ENCODE measurements at regions of chr2 and their contacts with region 1.

Region 1: GRCh38 chr2:164054651-164055050 is 318.8 kb upstream of the FIGN start:
- DNase-seq: no peak
- ATAC-seq: no peak
- H3K4me3 ChIP-seq: no peak overlapping the region
- H3K4me1 ChIP-seq: no peaks in the 10 kb centered on the region
- CTCF ChIP-seq: no peak

Region 2: DNA sequence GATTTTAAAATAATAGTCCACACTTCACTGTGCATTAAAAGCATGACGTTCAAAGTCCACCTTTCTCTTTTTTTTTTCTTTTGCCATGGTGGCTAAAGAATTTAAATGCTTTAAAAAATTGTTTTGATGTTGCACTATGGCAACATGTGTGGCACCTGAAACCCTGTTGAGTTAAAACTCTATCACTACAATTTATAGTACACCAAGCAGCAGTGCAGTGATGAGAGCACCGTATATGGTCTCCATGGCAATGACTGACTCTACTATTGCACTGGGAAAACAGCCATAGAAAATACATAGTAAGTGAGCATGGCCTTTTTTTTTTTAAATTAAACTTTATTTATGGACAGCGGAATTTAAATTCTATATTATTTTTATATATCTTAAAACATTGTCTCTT is 617.7 kb before region 1 on chr2:
- intact Hi-C with region 1: no loop called
- DNase-seq: no peak
- ATAC-seq: no peak
- H3K4me3 ChIP-seq: no peak overlapping the region
- H3K4me1 ChIP-seq: no peaks in the 10 kb centered on the region
- CTCF ChIP-seq: no peak

Region 3: DNA sequence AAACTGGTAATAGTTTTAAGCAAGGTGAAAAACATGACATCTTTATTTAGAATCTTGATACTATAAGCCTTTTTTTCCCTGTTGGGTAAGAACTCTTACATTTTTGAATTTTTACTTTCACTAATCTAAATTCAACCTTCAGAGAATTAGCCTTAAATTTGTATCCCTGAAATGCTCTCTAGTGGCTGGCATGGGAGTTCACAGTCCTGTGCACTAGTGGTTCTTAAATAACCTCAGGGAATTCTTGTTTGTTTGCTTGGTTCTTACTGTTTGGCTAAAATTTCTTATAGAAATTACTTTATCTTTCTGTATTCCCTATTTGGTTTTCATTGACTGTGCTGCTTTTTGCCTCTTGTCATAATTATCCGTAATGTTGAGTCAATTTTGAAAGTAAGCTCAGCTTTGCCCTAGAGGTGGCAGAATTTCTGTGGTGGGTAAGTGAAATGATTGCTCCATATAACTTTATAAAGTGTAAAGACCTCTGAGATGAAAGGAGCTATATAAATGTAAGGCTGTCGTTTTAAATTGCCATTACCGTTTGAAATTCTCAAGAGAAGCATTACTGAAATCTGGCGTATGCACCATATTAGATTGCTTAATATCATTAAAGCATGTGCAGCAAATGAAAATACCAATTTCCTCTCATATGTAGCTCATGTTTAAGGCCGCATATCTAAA is 72.4 kb after region 1 on chr2:
- intact Hi-C with region 1: loop called in 1 of 2 experiments (anchors 5 kb)
- DNase-seq: no peak
- ATAC-seq: no peak
- H3K4me3 ChIP-seq: no peak overlapping the region
- H3K4me1 ChIP-seq: no peaks in the 10 kb centered on the region
- CTCF ChIP-seq: no peak